Panc1 (cell line): ENCODE measurements at regions of chr5 and their contacts with region 1.

Region 1: DNA sequence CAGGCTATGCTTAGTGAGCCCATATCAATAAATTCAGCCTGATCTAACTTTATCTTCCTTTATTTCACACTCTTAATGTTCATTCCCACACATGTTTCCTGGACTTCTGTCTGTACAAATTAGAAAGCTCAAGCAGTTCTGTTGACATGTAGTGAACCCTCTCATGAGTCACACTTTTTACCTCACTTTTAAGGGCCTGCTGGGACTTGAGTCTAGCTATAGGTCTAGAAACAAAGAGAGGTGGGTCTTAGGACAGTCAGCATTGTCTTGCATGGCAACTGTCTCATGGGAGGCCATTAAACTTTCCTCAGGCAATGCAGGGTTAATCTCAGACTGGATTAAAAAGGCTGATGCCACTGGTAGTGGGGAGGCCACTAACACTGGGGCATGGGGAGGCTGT is 8.6 kb upstream of the CCNH start:
- DNase-seq: no peak
- ATAC-seq: no peak
- H3K4me3 ChIP-seq: no peak overlapping the region
- H3K27ac ChIP-seq: no peak overlapping the region
- H3K4me1 ChIP-seq: no peaks in the 10 kb centered on the region
- H3K27me3 ChIP-seq: no peaks in the 10 kb centered on the region
- CTCF ChIP-seq: no peak

Region 2: GRCh38 chr5:86579502-86579901 is 841.8 kb before region 1 on chr5:
- CTCF ChIA-PET with region 1: no interaction called
- POLR2A ChIA-PET with region 1: no interaction called
- in situ Hi-C with region 1: no loop called
- intact Hi-C with region 1: no loop called
- DNase-seq: no peak
- ATAC-seq: no peak
- H3K4me3 ChIP-seq: no peak overlapping the region
- H3K27ac ChIP-seq: no peak overlapping the region
- H3K4me1 ChIP-seq: no peaks in the 10 kb centered on the region
- H3K27me3 ChIP-seq: no peaks in the 10 kb centered on the region
- CTCF ChIP-seq: no peak

Region 3: GRCh38 chr5:87002485-87002884 is 418.8 kb before region 1 on chr5:
- CTCF ChIA-PET with region 1: no interaction called
- POLR2A ChIA-PET with region 1: no interaction called
- in situ Hi-C with region 1: no loop called
- intact Hi-C with region 1: no loop called
- DNase-seq: no peak
- ATAC-seq: no peak
- H3K4me3 ChIP-seq: no peak overlapping the region
- H3K27ac ChIP-seq: no peak overlapping the region
- H3K4me1 ChIP-seq: no peaks in the 10 kb centered on the region
- H3K27me3 ChIP-seq: no peaks in the 10 kb centered on the region
- CTCF ChIP-seq: no peak

Region 4: DNA sequence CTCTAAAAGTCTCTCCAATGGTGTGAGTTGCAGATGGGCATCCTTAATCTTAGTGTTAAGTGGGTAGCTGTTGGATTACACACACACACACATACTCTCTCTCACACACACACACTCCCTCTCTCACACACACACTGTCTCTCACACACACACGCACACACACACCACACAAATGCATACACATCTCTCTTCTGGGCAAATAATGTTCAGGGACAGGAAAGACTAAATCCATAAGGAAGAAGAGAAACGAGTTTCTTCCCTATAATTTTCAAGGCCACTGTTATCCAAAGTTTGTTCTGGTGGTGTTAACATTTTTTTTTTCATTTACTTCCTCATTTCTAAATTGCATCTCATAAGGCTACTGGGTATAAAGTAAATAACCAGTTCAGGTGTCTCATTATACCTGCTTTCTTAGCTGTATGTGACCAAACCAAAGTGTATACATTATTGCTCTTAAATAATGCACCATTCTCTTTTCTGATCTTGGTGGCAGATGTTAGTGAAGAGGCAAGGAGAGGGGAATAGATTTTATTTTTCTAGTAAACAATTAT is 13.9 kb after region 1 on chr5:
- CTCF ChIA-PET with region 1: no interaction called
- POLR2A ChIA-PET with region 1: no interaction called
- in situ Hi-C with region 1: no loop called
- intact Hi-C with region 1: no loop called
- DNase-seq: no peak
- ATAC-seq: no peak
- H3K4me3 ChIP-seq: no peak overlapping the region
- H3K27ac ChIP-seq: no peak overlapping the region
- H3K4me1 ChIP-seq: no peaks in the 10 kb centered on the region
- H3K27me3 ChIP-seq: no peaks in the 10 kb centered on the region
- CTCF ChIP-seq: no peak

Region 5: DNA sequence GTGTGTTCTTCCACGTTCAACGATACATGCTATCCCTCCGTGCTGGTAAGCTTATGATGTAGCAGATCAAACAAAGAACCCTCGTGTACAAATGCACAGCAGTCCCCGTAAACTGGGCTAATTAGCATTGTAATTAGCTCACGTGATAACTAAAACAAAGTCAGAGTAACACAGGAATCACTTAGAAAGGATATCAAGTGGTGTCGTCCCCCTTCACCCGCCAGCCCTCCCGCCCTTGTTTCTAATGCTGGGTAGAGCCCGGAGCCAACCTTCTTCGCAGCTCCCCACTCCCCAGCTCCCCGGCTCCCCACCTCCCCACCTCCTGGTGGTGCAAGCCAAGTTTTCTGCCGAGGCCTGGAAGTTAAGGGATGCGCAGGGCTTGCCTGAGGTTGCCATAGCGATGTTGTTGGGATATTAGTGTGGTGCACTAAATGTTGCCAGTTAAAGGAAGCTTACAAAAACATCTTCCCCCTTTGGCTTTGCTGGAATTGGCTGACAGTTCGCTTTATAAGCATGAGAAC is 349.4 kb after region 1 on chr5:
- CTCF ChIA-PET with region 1: no interaction called
- POLR2A ChIA-PET with region 1: no interaction called
- in situ Hi-C with region 1: no loop called
- intact Hi-C with region 1: loop called (anchors 10 kb)
- DNase-seq: no peak
- ATAC-seq: no peak
- H3K4me3 ChIP-seq: no peak overlapping the region
- H3K27ac ChIP-seq: no peak overlapping the region
- H3K4me1 ChIP-seq: no peaks in the 10 kb centered on the region
- H3K27me3 ChIP-seq: no peaks in the 10 kb centered on the region
- CTCF ChIP-seq: no peak

Region 6: DNA sequence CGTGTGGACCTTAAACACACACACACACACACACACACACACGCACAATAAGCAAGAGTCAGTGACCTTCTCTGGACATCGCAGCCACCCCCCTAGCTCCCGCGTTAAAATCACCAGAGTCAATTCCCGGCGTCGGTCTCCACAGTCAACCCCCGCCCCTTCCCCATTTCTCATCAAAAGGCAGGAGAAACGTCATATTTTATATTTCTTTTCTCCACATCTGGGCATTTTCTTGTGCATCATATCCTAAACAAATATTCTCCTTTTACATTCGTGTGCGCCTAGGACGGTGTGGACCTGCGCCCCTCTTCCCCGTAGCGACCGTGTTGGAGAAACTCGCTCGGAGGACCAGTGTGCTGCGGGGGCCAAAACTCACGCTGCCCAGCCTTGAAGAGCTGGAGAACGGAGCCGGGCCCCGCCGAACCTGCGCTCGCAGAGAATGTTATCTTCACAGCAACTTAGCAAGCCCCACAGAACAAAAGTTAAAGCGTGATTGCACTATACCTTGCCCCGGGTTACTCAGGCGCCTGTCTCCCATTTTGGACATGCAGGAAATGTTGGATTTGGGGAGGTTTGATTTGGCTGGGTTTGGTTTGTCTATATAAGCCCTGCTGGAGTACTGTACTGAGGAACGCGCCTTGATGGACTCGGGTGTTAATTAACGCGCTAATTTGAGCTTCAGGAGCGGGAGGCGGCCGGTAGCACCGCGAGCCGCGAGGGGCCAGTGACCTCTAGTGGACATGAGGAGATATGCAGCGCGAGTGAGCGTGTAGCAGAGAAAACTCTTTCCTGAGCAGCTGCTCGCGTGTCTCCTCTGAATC is 1269.3 kb after region 1 on chr5:
- CTCF ChIA-PET with region 1: no interaction called
- POLR2A ChIA-PET with region 1: no interaction called
- in situ Hi-C with region 1: no loop called
- intact Hi-C with region 1: loop called (anchors 10 kb)
- DNase-seq: no peak
- ATAC-seq: peak; percentile 92
- H3K4me3 ChIP-seq: peak overlapping the region; percentile 30 to 56
- H3K27ac ChIP-seq: no peak overlapping the region
- H3K4me1 ChIP-seq: peaks cover 10% of the 10 kb centered on the region; the same call in 1 of the 2 replicates
- H3K27me3 ChIP-seq: peaks cover 3% of the 10 kb centered on the region
- CTCF ChIP-seq: peak; percentile 99